ENCODE measurements at regions of chr22 and their contacts with region 1.

Region 1: DNA sequence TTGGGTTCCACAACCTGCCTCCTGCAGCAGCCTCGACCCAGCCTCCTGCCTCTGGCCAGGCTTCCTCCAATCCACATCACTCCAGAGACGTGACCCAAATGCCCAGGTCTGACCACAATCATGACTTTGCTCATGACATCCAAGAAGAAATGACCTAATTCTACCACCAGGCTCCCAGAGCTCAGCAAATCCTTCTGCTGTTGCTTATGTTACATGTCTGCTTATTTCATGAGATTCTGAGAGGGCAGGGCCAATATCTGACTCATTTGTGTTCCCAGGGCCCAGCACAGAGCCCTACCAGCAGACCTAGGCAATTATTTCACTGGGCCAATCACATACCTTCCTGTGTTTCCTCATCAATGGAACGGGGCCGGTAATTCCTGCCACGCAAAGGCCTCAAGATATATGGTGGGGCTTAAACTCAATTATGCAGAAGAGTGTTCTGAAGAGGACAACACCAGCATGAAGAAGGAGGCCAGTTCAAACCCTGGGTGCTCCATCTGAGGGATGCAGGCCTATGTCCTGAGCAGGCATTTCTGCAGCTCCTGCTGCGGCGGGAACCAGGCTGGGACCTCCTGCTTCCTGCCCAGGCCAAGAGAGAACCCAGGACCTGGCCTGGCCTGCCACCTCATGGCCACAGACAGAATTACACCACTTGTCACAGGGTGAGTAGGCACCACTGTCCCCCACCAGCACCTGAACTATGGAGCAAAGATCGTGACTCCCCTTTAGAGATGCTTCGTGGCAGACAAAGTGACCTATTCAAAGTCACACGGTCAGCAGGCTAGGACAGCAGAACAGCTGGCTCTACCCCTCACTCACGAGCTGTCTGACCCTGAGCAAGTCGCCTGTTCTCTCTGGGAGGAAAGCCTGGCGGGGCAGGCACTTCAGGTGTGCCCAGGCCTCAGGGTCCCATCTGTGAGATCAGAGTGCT is 5.9 kb downstream of the CENPM start:
- DNase-seq: peak; percentile 82
- H3K4me3 ChIP-seq: no peak overlapping the region
- H3K27ac ChIP-seq: peak overlapping the region; percentile 62 to 82
- H3K4me1 ChIP-seq: peaks cover 4% of the 10 kb centered on the region
- H3K27me3 ChIP-seq: no peaks in the 10 kb centered on the region
- CTCF ChIP-seq: peak; percentile 68 to 97 (median 92)
- POLR2A ChIP-seq: no peak

Region 2: GRCh38 chr22:41697126-41697775 is 243.8 kb before region 1 on chr22:
- intact Hi-C with region 1: loop called (anchors 1 kb)
- DNase-seq: peak; percentile 80
- H3K4me3 ChIP-seq: no peak overlapping the region
- H3K27ac ChIP-seq: peak overlapping the region; percentile 15 to 47
- H3K4me1 ChIP-seq: no peaks in the 10 kb centered on the region
- H3K27me3 ChIP-seq: no peaks in the 10 kb centered on the region
- CTCF ChIP-seq: peak; percentile 90 to 97 (median 96)
- POLR2A ChIP-seq: no peak

Region 3: DNA sequence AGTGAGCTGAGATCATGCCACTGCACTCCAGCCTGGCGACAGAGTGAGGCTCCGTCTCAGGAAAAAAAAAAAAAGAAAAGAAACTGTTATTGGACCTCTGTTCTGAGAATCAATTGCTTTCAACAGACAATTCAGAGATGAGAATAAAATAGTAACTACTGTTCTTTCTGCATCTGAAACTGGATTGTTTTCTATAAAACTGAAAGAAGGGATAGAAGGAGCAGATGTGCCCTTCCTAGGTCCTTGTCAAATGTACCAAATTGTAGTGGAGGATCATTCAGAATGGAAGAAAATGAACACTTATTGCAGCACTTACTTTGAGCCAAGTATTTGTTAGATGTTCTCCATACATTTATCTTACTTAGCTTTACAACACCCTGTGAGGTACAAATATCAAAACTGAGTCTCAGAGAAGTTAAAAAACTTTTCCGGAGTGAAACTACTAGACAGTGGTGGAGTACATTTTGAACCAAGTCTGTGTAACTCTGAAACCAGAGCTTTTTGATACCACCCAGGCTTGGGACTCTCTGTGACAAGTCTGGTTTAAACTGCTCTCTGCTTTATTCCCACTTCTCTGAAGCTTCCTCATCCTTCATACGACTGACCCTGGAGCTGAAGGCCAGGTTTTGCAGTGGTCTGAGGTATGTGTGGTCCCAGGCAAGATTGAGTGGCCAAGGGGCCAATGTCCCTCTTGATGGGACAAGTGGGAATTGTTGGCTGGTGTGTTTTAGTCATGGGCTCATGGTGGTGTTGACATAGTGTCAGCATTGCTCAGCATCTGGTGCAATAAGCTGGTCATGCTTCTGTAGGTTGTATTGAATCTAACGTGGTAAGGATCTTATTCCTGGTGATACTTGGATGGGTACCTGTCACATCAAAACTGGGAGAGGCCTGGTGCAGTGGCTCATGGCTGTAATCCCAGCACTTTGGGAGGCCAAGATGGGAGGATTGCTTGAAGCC is 188.8 kb before region 1 on chr22:
- intact Hi-C with region 1: loop called (anchors 5 kb)
- DNase-seq: no peak
- H3K4me3 ChIP-seq: no peak overlapping the region
- H3K27ac ChIP-seq: no peak overlapping the region
- H3K4me1 ChIP-seq: no peaks in the 10 kb centered on the region
- H3K27me3 ChIP-seq: no peaks in the 10 kb centered on the region
- CTCF ChIP-seq: no peak
- POLR2A ChIP-seq: no peak

Region 4: DNA sequence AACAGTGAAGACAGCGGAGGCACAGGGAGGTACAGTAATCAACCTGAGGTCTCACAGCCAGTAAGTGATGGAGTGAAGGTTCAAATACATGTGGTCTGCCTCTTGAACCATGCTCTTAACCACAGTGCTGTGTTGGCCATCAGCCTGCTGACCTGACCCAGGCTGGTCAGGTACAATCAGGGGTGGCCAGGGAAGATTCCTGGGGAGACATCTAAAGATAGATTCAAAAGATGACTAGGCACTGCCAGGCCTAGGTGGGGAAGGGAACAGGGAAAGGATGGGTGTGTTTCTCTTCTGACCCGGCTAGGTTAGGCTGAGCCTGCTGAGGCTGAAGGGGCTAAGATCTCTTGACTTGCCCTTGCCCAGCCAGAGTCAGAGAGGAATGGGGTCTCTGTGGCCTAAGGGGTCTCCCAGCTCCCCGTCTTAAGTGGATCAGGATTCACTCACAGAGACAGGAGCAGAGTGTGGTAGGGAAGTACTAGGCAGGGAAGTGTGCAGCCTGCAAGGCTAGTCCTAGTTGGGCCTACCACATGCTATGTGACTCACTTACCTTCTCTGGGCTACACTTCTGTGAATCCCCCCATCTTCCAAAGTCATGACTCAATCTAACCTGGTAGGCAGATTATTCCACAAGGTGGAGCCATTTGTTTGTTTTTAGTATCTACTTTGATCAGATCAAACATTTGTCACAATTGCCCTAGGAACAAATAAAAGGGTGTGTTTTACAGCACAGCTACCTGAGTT is 118.6 kb before region 1 on chr22:
- intact Hi-C with region 1: loop called (anchors 2 kb)
- DNase-seq: peak; percentile 58
- H3K4me3 ChIP-seq: no peak overlapping the region
- H3K27ac ChIP-seq: no peak overlapping the region
- H3K4me1 ChIP-seq: no peaks in the 10 kb centered on the region
- H3K27me3 ChIP-seq: no peaks in the 10 kb centered on the region
- CTCF ChIP-seq: peak in 3 of 4 experiments; percentile 62 to 79 (median 77)
- POLR2A ChIP-seq: no peak

Region 5: DNA sequence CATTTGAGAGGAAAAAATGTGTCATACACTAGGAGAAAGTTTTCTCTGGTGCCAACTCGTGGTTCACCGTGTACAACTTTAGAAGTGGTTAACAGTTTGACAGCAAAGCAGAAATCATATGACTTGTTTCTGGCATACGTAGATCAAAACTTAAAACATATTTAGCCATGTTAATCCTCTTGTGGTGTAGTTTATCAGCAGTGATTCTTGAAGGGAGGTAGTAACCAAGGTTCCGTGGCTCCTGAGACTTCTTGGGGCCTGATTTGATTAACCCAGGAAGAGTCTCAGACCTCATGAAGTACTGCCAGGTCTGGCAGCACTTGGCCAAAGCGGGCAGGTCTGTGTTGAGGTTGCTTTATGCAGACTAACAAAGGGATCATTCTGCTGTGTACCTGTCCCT is 67.7 kb before region 1 on chr22:
- intact Hi-C with region 1: no loop called
- DNase-seq: no peak
- H3K4me3 ChIP-seq: no peak overlapping the region
- H3K27ac ChIP-seq: no peak overlapping the region
- H3K4me1 ChIP-seq: no peaks in the 10 kb centered on the region
- H3K27me3 ChIP-seq: no peaks in the 10 kb centered on the region
- CTCF ChIP-seq: no peak
- POLR2A ChIP-seq: no peak

Region 6: GRCh38 chr22:41907436-41908401 is 33.4 kb before region 1 on chr22:
- intact Hi-C with region 1: no loop called
- DNase-seq: no peak
- H3K4me3 ChIP-seq: no peak overlapping the region
- H3K27ac ChIP-seq: no peak overlapping the region
- H3K4me1 ChIP-seq: peaks cover 9% of the 10 kb centered on the region
- H3K27me3 ChIP-seq: peaks cover 13% of the 10 kb centered on the region
- CTCF ChIP-seq: no peak
- POLR2A ChIP-seq: no peak

Region 7: GRCh38 chr22:42437488-42438292 is 496.6 kb after region 1 on chr22:
- intact Hi-C with region 1: no loop called
- DNase-seq: no peak
- H3K4me3 ChIP-seq: peak overlapping the region; percentile 27 to 41
- H3K27ac ChIP-seq: no peak overlapping the region
- H3K4me1 ChIP-seq: peaks cover 5% of the 10 kb centered on the region
- H3K27me3 ChIP-seq: no peaks in the 10 kb centered on the region
- CTCF ChIP-seq: peak; percentile 96 to 99 (median 98)
- POLR2A ChIP-seq: no peak

Measured in prostate gland (tissue), 2 donors.